PC-3 (cell line): ENCODE measurements at regions of chr18 and their contacts with region 1.

Region 1: DNA sequence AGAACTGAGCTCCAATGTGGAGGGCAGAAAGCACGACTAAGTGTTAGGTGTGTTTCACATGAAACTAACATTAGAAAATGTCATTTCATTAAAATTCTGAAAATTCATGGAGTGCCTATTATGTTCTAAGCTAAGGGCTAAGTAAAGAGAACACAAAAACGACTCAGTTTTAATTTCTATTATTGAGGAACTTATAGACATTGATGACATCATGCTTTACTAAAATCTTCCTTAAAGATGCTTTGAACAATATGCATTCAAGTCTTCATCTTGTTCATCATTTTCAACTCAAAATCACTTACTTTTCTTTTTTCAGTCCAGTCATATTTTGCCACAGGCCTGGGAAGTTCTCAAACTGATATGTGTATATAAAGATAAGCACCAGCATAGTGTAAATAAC is 260.9 kb downstream of the NAPG start:
- DNase-seq: no peak
- ATAC-seq: no peak
- H3K4me3 ChIP-seq: no peak overlapping the region
- H3K27ac ChIP-seq: no peak overlapping the region
- H3K4me1 ChIP-seq: no peaks in the 10 kb centered on the region
- H3K27me3 ChIP-seq: peaks cover 73% of the 10 kb centered on the region
- CTCF ChIP-seq: no peak

Region 2: DNA sequence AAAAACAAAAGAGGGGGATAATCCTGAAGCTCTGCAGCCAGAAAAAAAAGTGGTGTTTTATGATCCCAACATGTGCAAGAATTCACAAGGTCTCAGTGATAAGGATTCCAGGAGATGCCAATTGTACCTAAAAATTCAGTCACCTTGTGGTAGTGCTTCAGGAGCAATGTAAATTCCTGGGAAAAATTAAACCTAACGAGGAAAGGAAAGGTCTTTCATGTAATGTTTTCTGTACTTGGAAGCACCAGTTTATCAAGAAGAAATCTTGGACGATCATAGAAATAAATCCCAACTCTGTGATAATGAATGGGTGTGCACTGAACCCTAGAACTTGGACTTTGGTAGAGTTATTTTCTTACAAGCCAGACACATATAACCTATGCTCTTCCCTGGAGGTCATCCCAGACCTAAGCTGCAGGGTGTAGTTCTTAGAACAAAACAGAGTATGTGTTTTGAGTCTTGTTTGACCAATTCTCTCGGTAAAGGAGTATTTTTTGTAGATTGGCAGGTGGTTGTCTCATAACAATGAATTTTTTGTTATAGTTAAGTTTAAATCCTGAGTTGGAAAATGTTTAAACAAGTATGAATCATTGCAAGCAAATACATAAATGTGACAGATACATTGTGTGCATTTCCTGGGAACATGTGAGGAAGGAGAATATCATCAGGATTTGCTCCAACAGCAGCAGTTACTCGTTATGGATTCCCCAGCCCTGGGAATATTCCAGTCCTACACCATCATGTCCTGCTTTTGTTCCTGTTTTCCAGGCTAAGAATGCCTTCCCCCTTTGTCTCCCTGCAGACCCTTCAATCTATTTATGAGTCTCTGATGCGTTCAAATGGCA is 36.3 kb before region 1 on chr18:
- CTCF ChIA-PET with region 1: interaction called, 10 read pairs
- POLR2A ChIA-PET with region 1: no interaction called
- intact Hi-C with region 1: no loop called
- DNase-seq: peak; percentile 78
- ATAC-seq: peak; percentile 83
- H3K4me3 ChIP-seq: no peak overlapping the region
- H3K27ac ChIP-seq: peak overlapping the region; percentile 82
- H3K4me1 ChIP-seq: peaks cover 37% of the 10 kb centered on the region
- H3K27me3 ChIP-seq: peaks cover 22% of the 10 kb centered on the region
- CTCF ChIP-seq: no peak